ENCODE measurements at regions of chr2 and their contacts with region 1.

Region 1: DNA sequence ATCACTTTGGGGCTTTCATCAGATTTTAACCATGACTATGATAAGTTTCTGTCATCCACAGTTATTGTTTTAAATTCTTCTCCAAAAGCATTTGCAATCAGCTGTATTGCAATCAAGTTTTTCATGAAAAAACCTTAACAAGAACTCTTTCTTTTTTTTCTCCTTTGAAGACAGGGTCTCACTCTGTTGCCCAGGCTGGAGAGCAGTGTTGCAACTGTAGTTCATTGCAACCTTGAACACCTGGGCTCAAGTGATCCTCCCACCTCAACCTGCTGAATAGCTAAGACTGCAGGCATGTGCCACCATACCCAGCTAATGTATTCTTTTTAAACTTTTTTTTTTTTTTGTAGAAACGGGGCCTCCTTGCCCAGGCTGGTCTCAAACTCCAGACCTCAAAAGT is 45.5 kb upstream of the C2orf66 start:
- DNase-seq: no peak
- ATAC-seq: no peak
- H3K4me3 ChIP-seq: no peak overlapping the region
- H3K27ac ChIP-seq: no peak overlapping the region
- H3K4me1 ChIP-seq: no peaks in the 10 kb centered on the region
- H3K27me3 ChIP-seq: no peaks in the 10 kb centered on the region
- CTCF ChIP-seq: no peak

Region 2: DNA sequence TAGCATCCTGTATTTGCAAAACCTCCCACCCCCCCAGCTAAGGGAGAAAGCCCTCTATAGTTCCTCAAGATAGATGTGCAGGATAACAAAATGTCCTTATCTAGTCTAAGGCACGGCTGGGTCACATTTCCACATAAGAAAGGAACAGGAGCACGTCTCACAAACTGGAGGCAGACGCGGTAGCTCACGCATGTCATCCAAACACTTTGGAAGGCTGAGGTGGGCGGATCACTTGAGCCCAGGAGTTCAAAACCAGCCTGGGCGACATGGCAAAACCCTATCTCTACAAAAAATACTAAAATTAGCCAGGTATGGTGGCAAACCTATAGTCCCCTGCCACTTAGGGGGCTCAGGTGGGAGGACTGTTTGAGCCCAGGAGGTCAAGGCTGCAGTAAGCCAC is 570.9 kb after region 1 on chr2:
- intact Hi-C with region 1: loop called in 1 of 10 experiments (anchors 5 kb)
- DNase-seq: no peak
- ATAC-seq: peak in 1 of 8 donors; percentile 22
- H3K4me3 ChIP-seq: no peak overlapping the region
- H3K27ac ChIP-seq: peak overlapping the region in 1 of 10 donors; percentile 7
- H3K4me1 ChIP-seq: peaks cover 3 to 97% (median 65%) of the 10 kb centered on the region in 9 donors
- H3K27me3 ChIP-seq: no peaks in the 10 kb centered on the region
- CTCF ChIP-seq: no peak